GM18951 (cell line): ENCODE measurements at regions of chr5 and their contacts with region 1.

Region 1: GRCh38 chr5:154189819-154190594 is 526 bp upstream of the GALNT10 start:
- POLR2A ChIP-seq: peak; percentile 40

Region 2: GRCh38 chr5:152978141-152978835 is 1211.7 kb before region 1 on chr5:
- in situ Hi-C with region 1: no loop called
- POLR2A ChIP-seq: no peak

Region 3: DNA sequence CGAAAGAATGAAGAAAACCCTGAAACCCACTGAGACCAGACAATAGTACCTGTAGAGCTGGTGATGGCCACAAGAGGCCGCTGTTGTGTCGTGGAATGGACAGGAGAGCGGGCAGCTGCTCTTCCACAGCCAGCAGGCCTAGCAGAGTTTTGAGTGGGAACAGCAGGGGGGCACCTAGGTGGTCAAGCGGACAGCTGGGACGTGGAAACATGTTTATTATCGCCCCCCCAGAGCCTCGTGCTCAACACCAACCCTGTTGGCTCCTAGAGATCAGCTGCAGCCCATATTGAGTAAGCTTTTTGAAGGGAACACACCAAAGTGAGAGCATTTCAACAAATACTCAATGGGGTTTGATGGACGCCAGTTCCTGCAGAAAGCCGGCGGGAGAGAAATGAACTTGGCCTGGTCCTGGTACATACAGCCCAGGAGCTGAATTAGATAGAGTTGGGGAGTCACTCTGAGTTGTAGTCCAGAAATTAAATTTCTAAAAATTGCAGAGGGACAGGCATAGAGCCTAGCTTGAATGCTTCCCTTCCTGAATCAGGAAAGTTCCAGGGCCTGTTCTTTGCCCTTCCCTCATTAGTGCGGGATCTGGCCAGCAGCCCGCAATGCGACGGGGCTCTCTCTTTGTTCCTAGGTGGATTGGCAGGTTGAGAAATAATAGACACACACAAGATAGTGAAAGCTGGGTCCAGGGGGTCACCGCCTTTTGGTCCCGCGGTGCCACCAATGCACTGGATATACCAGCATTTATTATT is 117.4 kb before region 1 on chr5:
- in situ Hi-C with region 1: loop called (anchors 10 kb)
- POLR2A ChIP-seq: no peak

Region 4: DNA sequence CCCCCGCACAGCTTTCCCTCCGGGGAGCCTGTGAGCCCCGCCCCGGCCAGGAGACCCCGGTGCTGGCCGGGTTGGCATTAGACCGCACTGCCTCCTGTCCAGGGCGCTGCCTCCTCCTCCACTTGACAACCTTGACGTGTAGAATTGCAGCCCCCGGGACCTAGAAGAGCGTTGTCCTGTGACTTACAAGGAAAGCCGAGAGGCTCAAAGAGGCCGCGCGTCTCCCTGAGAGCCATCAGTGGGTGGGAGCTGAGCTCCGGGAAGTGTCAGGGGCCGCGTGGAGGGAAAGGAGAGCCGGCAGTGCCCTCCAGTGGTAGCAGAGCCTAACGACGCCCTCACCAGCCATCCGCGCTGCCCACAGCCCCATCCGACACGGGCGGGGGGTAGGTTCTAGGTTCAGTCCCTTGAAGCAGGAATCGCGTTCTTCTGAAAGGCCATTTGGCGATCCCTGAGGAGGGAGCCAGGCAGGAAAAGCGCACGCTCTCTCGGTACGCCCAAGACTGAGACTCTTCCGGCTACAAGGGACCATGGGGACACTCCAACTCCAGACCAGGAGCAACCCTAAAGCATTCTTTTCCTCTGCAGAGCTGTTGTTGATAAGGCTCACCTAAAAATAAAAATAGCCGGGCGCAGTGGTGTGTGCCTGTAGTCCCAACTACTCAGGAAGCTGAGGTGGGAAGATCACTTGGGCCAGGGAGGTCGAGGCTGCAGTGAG is 215.2 kb after region 1 on chr5:
- in situ Hi-C with region 1: loop called (anchors 10 kb)
- POLR2A ChIP-seq: no peak